ENCODE measurements at regions of chr20 and their contacts with region 1.

Region 1: DNA sequence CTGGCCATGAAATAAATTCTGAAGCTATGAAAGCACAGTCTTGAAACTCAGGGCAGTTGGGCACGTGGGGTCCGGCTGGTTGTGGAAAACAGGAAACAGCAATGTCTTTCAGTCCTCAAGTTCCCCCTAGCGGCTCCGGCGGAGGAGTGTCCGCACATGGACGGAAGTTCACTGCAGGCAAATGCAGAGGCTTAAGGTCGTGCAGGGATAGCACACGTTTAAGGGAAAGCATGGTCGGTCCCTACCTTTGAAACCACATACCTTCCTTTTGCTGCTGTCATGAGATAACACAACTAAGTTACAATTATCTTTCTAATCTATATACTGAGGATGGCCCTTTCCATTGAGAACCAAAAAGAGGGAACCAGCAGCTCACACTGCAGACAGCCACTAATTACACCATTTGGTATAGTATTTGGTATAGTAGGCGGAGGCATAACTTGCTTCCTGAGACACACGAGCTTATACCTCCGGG is 52.6 kb upstream of the NFATC2 start:
- DNase-seq: peak; percentile 74 to 81 (median 76)
- H3K4me3 ChIP-seq: peak overlapping the region in 1 of 3 experiments; percentile 40
- H3K4me3 Mint-ChIP-seq: peak overlapping the region; percentile 52 to 84
- H3K27ac ChIP-seq: no peak overlapping the region
- H3K27ac Mint-ChIP-seq: peak overlapping the region in 3 of 7 donors; percentile 23 to 86 (median 57)
- H3K4me1 ChIP-seq: peaks cover 14 to 15% of the 10 kb centered on the region in 2 donors
- H3K4me1 Mint-ChIP-seq: peaks cover 18% of the 10 kb centered on the region
- H3K27me3 ChIP-seq: no peaks in the 10 kb centered on the region
- H3K27me3 Mint-ChIP-seq: peaks cover 0 to 10% (median 6%) of the 10 kb centered on the region in 3 donors
- CTCF ChIP-seq: peak; percentile 84

Region 2: GRCh38 chr20:50943069-50943468 is 652.0 kb before region 1 on chr20:
- intact Hi-C with region 1: no loop called
- DNase-seq: no peak
- H3K4me3 ChIP-seq: no peak overlapping the region
- H3K4me3 Mint-ChIP-seq: no peak overlapping the region
- H3K27ac ChIP-seq: no peak overlapping the region
- H3K27ac Mint-ChIP-seq: no peak overlapping the region
- H3K4me1 ChIP-seq: no peaks in the 10 kb centered on the region
- H3K4me1 Mint-ChIP-seq: no peaks in the 10 kb centered on the region
- H3K27me3 ChIP-seq: no peaks in the 10 kb centered on the region
- H3K27me3 Mint-ChIP-seq: peaks cover 0 to 5% (median 0%) of the 10 kb centered on the region in 3 donors
- CTCF ChIP-seq: no peak

Region 3: DNA sequence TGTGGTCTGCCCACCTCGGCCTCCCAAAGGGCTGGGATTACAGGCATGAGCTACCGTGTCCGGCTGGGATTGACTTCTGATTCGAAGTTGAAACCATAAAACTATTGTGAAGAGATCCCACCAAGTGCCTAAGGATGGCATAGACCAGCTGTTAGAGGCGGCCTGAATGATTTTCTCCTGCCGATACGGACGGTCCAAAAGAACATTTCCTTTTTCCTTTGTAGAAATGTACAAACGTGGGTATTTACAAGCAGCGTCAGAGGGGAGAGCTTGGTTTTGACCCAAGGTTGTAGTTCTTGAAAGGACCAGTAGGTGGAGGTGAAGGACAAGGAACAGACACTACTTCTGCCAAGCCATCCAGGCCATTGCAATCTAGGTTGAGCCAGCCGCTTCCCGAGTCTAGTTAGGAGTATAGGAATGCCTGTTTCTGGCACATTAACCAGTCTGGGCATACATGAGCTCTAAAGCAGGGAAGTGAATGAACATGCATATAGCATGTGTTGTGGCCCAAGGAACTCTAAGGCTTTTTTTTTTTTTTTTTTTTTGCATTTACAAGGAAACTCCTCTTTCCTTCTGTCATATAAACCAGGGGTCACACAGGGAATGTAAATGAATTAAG is 607.4 kb before region 1 on chr20:
- intact Hi-C with region 1: loop called in 1 of 2 experiments (anchors 10 kb)
- DNase-seq: peak; percentile 59 to 73 (median 68)
- H3K4me3 ChIP-seq: no peak overlapping the region
- H3K4me3 Mint-ChIP-seq: no peak overlapping the region
- H3K27ac ChIP-seq: no peak overlapping the region
- H3K27ac Mint-ChIP-seq: no peak overlapping the region
- H3K4me1 ChIP-seq: no peaks in the 10 kb centered on the region
- H3K4me1 Mint-ChIP-seq: peaks cover 5% of the 10 kb centered on the region
- H3K27me3 ChIP-seq: no peaks in the 10 kb centered on the region
- H3K27me3 Mint-ChIP-seq: peaks cover 9 to 20% (median 14%) of the 10 kb centered on the region in 3 donors
- CTCF ChIP-seq: peak; percentile 84

Region 4: DNA sequence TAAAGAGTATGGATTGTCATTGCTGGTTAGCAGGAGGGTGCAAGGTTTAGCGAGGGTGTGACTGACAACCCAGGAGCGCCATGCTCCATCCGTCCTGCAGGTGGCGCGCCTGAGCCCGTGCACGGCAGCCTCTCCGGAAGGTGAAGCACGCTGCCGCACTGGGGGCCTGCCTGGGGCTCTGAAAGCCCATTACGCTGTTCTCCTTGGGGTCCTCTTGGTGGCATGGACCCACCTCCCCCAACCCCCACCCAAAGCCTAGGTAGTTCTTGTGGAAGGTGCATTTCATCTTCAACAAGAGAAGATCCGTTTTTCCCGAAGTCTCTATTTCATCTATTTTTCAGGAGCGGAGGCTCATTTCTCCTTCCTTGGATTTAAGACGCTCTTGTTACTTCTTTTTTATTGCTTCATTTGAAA is 374.8 kb before region 1 on chr20:
- intact Hi-C with region 1: loop called in 1 of 2 experiments (anchors 10 kb)
- DNase-seq: peak in 2 of 3 donors; percentile 8 to 11
- H3K4me3 ChIP-seq: no peak overlapping the region
- H3K4me3 Mint-ChIP-seq: peak overlapping the region in 1 of 2 donors; percentile 22
- H3K27ac ChIP-seq: no peak overlapping the region
- H3K27ac Mint-ChIP-seq: no peak overlapping the region
- H3K4me1 ChIP-seq: no peaks in the 10 kb centered on the region
- H3K4me1 Mint-ChIP-seq: peaks cover 31% of the 10 kb centered on the region
- H3K27me3 ChIP-seq: peaks cover 6 to 25% of the 10 kb centered on the region in 2 donors
- H3K27me3 Mint-ChIP-seq: peaks cover 17 to 35% (median 20%) of the 10 kb centered on the region in 3 donors
- CTCF ChIP-seq: peak; percentile 86

Region 5: GRCh38 chr20:51385646-51386530 is 209.2 kb before region 1 on chr20:
- intact Hi-C with region 1: loop called (anchors 5 to 10 kb)
- DNase-seq: no peak
- H3K4me3 ChIP-seq: no peak overlapping the region
- H3K4me3 Mint-ChIP-seq: no peak overlapping the region
- H3K27ac ChIP-seq: no peak overlapping the region
- H3K27ac Mint-ChIP-seq: no peak overlapping the region
- H3K4me1 ChIP-seq: no peaks in the 10 kb centered on the region
- H3K4me1 Mint-ChIP-seq: no peaks in the 10 kb centered on the region
- H3K27me3 ChIP-seq: no peaks in the 10 kb centered on the region
- H3K27me3 Mint-ChIP-seq: peaks cover 0 to 1% (median under 1%) of the 10 kb centered on the region in 3 donors
- CTCF ChIP-seq: peak; percentile 5

Region 6: DNA sequence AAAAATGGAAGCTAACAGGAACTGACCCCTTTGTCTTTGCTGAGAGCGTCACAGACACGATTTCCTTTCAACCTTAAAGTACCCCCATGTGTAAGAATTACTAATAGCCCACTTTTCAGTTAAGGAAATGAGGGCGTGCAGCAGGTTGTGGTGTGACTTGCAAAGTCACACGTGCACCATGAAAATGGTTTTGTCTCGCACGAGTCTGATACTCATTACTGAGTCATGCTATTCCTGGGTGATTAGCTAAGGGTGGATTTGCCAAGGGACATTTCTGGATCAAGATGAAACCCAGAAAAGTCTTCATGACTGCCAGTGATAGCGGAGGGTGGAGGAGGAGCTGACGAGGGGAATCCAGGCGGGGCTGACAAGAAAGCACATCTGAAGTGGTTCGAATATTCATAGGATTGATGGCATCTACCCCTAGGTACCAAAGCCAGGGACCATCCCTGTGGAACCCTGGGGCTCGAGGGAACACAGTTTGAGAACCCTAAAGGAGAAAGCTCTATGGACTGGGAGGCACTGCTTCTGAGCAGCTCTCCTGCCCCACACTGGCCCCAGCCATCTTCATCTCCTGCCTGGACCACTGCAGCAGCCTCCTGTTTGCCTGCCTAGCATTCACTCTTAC is 40.4 kb before region 1 on chr20:
- intact Hi-C with region 1: no loop called
- DNase-seq: no peak
- H3K4me3 ChIP-seq: no peak overlapping the region
- H3K4me3 Mint-ChIP-seq: no peak overlapping the region
- H3K27ac ChIP-seq: no peak overlapping the region
- H3K27ac Mint-ChIP-seq: no peak overlapping the region
- H3K4me1 ChIP-seq: no peaks in the 10 kb centered on the region
- H3K4me1 Mint-ChIP-seq: no peaks in the 10 kb centered on the region
- H3K27me3 ChIP-seq: peaks cover under 1 to 15% of the 10 kb centered on the region in 2 donors
- H3K27me3 Mint-ChIP-seq: peaks cover 6 to 22% (median 13%) of the 10 kb centered on the region in 3 donors
- CTCF ChIP-seq: no peak

Region 7: DNA sequence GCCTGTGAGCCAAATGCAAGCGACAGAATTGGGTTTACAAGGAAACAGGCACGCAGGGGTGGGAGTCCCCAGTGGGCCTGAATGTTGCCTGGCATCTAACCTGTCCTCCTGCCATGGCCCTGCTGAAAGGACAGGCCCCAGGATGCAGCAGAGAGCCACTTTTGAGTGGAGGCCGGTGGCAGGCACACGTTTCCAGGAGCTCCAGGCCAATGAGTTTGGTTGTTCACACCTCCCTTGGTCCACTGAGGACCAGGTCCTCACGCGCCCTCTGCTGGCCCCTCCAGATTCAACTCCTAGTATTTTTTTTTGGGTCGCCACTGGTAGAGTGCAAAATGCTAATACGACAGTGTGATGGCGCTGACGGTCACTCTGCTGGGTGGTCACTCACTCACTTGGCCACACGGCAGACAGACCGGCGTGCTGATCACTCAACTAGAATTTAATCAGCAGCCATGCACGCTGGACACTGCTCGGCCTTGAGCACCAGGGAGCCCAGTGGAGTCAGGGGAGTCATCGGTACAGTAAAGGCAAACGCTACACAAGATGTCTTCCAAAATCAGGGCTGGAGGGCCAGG is 29.1 kb after region 1 on chr20:
- intact Hi-C with region 1: no loop called
- DNase-seq: peak; percentile 28 to 47 (median 35)
- H3K4me3 ChIP-seq: no peak overlapping the region
- H3K4me3 Mint-ChIP-seq: no peak overlapping the region
- H3K27ac ChIP-seq: no peak overlapping the region
- H3K27ac Mint-ChIP-seq: peak overlapping the region in 1 of 7 donors; percentile 16
- H3K4me1 ChIP-seq: peaks cover 5 to 9% of the 10 kb centered on the region in 2 donors
- H3K4me1 Mint-ChIP-seq: peaks cover 19% of the 10 kb centered on the region
- H3K27me3 ChIP-seq: no peaks in the 10 kb centered on the region
- H3K27me3 Mint-ChIP-seq: peaks cover 12 to 24% (median 15%) of the 10 kb centered on the region in 3 donors
- CTCF ChIP-seq: peak; percentile 84

Region 8: DNA sequence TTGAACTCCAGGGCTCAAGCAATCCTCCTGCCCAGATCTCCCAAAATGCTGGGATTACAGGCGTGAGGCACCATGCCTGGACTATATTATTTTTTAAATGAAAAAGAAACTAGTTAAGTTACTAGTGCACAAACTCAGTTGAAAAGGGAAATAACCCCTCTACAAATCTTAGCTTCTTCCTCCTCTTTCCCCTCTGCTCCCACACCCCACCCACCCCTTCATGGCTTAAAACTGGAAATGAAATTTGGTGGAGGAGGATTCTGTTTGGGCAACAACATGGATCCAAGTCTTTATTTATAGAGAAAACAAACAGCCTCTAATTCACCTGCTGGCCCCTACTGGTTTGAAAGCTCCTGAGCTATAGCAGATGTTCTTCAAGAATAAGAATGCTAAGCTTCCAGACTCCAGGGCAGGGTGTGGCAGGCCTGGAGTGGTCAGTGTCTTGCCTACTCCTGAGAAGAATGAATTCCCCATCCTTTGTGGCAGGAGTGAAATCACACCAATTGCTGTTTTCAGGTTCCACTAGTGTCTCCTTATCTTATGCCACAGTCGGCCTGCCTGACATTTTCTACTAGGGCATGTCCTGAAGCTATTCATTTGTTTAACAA is 523.0 kb after region 1 on chr20:
- intact Hi-C with region 1: no loop called
- DNase-seq: no peak
- H3K4me3 ChIP-seq: no peak overlapping the region
- H3K4me3 Mint-ChIP-seq: no peak overlapping the region
- H3K27ac ChIP-seq: no peak overlapping the region
- H3K27ac Mint-ChIP-seq: peak overlapping the region in 1 of 7 donors; percentile 15
- H3K4me1 ChIP-seq: no peaks in the 10 kb centered on the region
- H3K4me1 Mint-ChIP-seq: peaks cover 7% of the 10 kb centered on the region
- H3K27me3 ChIP-seq: no peaks in the 10 kb centered on the region
- H3K27me3 Mint-ChIP-seq: peaks cover 0 to 4% (median 2%) of the 10 kb centered on the region in 3 donors
- CTCF ChIP-seq: no peak

Measured in CD14-positive monocyte (primary cell).